Activated CD8-positive, alpha-beta T cell treated with anti-CD3 and anti-CD28 coated beads, Interleukin-2, amount 10 ng/mL, durations not matched to agents 7 days and 5 days (primary cell): ENCODE measurements at regions of chr1 and their contacts with region 1.

Region 1: DNA sequence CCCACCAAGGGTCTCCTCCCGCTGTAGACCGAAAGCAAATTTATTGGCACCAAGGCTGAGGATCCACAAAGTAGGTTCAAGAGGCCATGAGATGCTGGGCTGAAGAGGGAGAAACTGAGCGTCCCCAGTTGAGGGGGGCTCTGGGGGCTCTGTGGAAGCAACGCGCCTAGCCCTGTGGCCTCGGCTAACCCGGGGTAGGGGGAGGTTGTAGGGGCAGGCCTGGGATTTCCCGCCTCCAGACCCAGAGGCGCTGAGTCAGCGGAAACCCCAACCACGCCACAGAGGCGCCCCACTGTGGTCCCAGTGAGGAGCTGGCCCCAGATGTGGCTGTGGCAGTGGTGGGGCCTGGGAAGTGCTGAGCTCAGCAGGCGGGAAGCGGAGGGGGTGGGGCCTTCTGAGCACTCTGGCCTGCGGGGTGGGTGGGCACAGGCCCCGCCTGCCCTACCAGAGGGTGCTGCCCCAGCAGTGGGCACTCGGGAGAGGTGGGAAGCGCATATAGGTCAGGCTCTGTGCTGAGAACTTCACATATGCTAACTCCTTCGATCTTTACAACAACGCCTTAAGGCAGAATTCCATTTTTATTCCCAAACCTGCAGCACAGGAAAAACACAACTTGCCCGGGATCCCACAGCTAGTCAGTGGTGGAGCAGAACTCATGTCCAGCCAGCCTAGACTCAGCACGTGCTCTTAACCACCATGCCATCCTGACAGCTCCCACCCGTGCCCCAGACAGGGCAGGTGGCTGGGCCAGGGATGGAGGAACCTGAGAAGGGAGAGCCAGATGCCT is 1.5 kb upstream of the COL16A1 start:
- DNase-seq: peak; percentile 79
- ATAC-seq: peak; percentile 79
- H3K4me3 Mint-ChIP-seq: peak overlapping the region; percentile 7
- H3K27ac Mint-ChIP-seq: no peak overlapping the region
- H3K4me1 Mint-ChIP-seq: peaks cover 41% of the 10 kb centered on the region
- H3K27me3 Mint-ChIP-seq: peaks cover 52% of the 10 kb centered on the region

Region 2: GRCh38 chr1:31669786-31670592 is 35.3 kb before region 1 on chr1:
- CTCF ChIA-PET with region 1: interaction called, 10 read pairs
- POLR2A ChIA-PET with region 1: no interaction called
- DNase-seq: peak; percentile 36
- ATAC-seq: peak; percentile 66
- H3K4me3 Mint-ChIP-seq: peak overlapping the region; percentile 7
- H3K27ac Mint-ChIP-seq: no peak overlapping the region
- H3K4me1 Mint-ChIP-seq: peaks cover 6% of the 10 kb centered on the region
- H3K27me3 Mint-ChIP-seq: peaks cover 19% of the 10 kb centered on the region

Region 3: GRCh38 chr1:31689821-31690220 is 15.5 kb before region 1 on chr1:
- CTCF ChIA-PET with region 1: no interaction called
- POLR2A ChIA-PET with region 1: no interaction called
- DNase-seq: no peak
- ATAC-seq: no peak
- H3K4me3 Mint-ChIP-seq: no peak overlapping the region
- H3K27ac Mint-ChIP-seq: no peak overlapping the region
- H3K4me1 Mint-ChIP-seq: no peaks in the 10 kb centered on the region
- H3K27me3 Mint-ChIP-seq: peaks cover 10% of the 10 kb centered on the region

Region 4: GRCh38 chr1:31715087-31715872 is 10.0 kb after region 1 on chr1:
- CTCF ChIA-PET with region 1: interaction called, 14 read pairs
- POLR2A ChIA-PET with region 1: interaction called, 3 read pairs
- DNase-seq: peak; percentile 30
- ATAC-seq: peak; percentile 47
- H3K4me3 Mint-ChIP-seq: no peak overlapping the region
- H3K27ac Mint-ChIP-seq: no peak overlapping the region
- H3K4me1 Mint-ChIP-seq: peaks cover 10% of the 10 kb centered on the region
- H3K27me3 Mint-ChIP-seq: peaks cover 58% of the 10 kb centered on the region

Region 5: GRCh38 chr1:31745096-31745945 is 40.0 kb after region 1 on chr1:
- CTCF ChIA-PET with region 1: interaction called, 11 read pairs
- POLR2A ChIA-PET with region 1: no interaction called
- DNase-seq: peak; percentile 80
- ATAC-seq: peak; percentile 89
- H3K4me3 Mint-ChIP-seq: no peak overlapping the region
- H3K27ac Mint-ChIP-seq: no peak overlapping the region
- H3K4me1 Mint-ChIP-seq: peaks cover 32% of the 10 kb centered on the region
- H3K27me3 Mint-ChIP-seq: no peaks in the 10 kb centered on the region

Region 6: GRCh38 chr1:31781756-31782371 is 76.6 kb after region 1 on chr1:
- CTCF ChIA-PET with region 1: no interaction called
- POLR2A ChIA-PET with region 1: no interaction called
- DNase-seq: no peak
- ATAC-seq: no peak
- H3K4me3 Mint-ChIP-seq: no peak overlapping the region
- H3K27ac Mint-ChIP-seq: no peak overlapping the region
- H3K4me1 Mint-ChIP-seq: no peaks in the 10 kb centered on the region
- H3K27me3 Mint-ChIP-seq: peaks cover 7% of the 10 kb centered on the region